Ovary (tissue), 10 donors: ENCODE measurements at regions of chr9 and their contacts with region 1.

Region 1: DNA sequence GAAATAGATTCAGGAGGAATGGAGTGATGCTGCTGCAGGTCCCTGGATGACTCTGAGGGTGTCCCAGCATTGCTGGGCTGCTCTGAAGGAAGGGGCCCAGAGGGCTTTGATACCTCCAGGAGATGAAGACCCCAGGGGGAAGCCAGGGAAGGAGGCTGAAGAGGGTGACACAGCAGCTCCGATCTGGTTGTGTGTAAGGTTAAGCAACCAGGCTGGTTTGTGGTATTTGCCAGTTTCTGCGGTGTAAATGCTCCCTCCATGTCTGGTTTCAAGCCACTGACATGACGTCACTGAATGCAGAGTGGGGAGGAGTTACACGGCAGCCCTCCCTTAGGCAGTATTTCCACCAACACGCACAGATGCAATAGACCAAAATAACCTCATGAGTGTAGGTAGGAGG is 40.0 kb upstream of the ORM1 start:
- DNase-seq: peak; percentile 14 to 38 (median 31)
- H3K4me3 ChIP-seq: no peak overlapping the region
- H3K27ac ChIP-seq: no peak overlapping the region
- H3K4me1 ChIP-seq: peaks cover 14% of the 10 kb centered on the region
- H3K27me3 ChIP-seq: no peaks in the 10 kb centered on the region
- CTCF ChIP-seq: no peak
- EP300 ChIP-seq: no peak
- POLR2A ChIP-seq: no peak

Region 2: GRCh38 chr9:114082017-114082762 is 200.7 kb before region 1 on chr9:
- intact Hi-C with region 1: loop called in 1 of 4 experiments (anchors 5 kb)
- DNase-seq: peak; percentile 86 to 93 (median 90)
- H3K4me3 ChIP-seq: no peak overlapping the region
- H3K27ac ChIP-seq: no peak overlapping the region
- H3K4me1 ChIP-seq: no peaks in the 10 kb centered on the region
- H3K27me3 ChIP-seq: no peaks in the 10 kb centered on the region
- CTCF ChIP-seq: peak; percentile 83 to 87 (median 84)
- EP300 ChIP-seq: no peak
- POLR2A ChIP-seq: no peak

Region 3: GRCh38 chr9:114108016-114108833 is 174.7 kb before region 1 on chr9:
- intact Hi-C with region 1: loop called in 1 of 4 experiments (anchors 5 kb)
- DNase-seq: peak; percentile 55 to 87 (median 73)
- H3K4me3 ChIP-seq: no peak overlapping the region
- H3K27ac ChIP-seq: no peak overlapping the region
- H3K4me1 ChIP-seq: no peaks in the 10 kb centered on the region
- H3K27me3 ChIP-seq: no peaks in the 10 kb centered on the region
- CTCF ChIP-seq: peak; percentile 43 to 62 (median 54)
- EP300 ChIP-seq: no peak
- POLR2A ChIP-seq: no peak